Adrenal gland (tissue), 19 donors: ENCODE measurements at regions of chr17 and their contacts with region 1.

Region 1: DNA sequence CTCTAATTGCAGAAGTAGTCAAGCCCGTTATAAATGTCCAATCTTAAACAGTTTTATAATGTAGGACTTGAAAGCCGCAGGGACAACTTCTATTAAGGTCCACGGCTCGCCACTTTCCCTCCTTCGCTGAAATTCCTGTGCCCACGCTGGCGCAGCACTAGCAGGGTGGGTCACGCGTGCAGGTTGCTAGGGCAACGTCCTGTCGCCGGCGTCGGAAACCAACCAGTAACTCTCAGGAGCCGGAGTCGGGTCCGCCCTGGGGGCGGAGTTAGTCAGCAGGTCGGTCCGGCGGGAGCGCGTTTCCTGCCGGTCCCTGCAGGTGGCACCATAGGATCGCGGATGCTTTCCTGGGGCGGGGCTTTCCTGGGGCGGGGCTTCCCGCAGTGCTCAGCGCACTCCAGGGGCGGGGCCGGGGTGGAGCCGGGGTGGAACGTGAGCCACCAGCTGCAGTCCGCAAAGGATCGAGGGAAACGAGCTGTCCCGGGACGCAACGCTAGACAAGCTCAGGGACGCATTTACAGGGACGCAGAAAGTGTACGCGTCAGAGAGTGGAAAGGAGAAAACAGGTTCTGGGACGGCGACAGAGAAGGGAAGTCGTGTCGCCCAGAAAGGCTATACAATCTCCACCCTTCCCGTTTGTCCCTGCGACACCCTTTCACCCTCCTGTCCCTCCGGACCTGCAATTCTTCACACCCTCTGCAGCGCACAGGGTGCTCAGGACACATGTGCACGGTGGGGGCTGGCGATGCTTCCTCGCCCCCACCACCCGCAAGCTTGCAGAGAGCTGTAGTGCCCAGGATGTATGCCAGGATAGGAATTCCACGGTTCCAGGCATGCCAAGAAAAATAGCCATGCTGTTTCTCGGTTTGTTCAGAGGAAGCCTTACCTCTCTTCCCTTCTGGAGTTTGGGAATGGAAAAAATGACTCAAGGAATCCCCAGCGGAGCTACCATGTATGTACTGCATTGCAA is 12.4 kb downstream of the COPZ2 start:
- DNase-seq: peak; percentile 98 to 99 (median 99)
- H3K4me3 ChIP-seq: peak overlapping the region in 2 of 4 donors; percentile 30 to 59
- H3K27ac ChIP-seq: peak overlapping the region; percentile 64 to 93 (median 84)
- H3K4me1 ChIP-seq: peaks cover 30 to 37% of the 10 kb centered on the region in 2 donors
- H3K27me3 ChIP-seq: no peaks in the 10 kb centered on the region
- CTCF ChIP-seq: peak; percentile 67 to 92 (median 82)
- POLR2A ChIP-seq: peak in 1 of 2 donors; percentile 85

Region 2: DNA sequence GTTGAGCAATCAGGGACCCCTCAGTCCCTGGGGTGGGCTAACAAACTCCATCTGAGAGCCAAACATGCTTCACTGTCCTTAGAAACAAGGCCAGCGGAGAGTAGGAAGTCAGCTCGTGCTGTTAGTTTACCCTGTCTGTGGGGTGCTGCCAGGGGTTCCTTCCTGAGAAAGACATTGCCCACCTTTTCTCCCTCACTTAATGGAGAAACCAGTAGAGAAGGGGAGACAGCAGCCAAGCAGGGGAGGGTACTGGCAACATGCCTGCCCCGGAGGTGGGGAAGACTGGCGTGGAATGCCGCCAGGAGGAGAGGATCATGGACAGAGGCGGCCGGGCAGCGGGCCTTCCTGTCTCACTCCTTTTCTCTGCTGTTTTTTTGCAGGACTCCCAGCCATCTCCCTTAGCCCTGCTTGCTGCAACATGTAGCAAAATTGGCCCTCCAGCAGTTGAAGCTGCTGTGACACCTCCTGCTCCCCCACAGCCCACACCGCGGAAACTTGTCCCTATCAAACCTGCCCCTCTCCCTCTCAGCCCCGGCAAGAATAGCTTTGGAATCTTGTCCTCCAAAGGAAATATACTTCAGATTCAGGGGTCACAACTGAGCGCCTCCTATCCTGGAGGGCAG is 109.3 kb before region 1 on chr17:
- intact Hi-C with region 1: no loop called
- DNase-seq: no peak
- H3K4me3 ChIP-seq: no peak overlapping the region
- H3K27ac ChIP-seq: no peak overlapping the region
- H3K4me1 ChIP-seq: peaks cover 0 to 6% of the 10 kb centered on the region in 2 donors
- H3K27me3 ChIP-seq: no peaks in the 10 kb centered on the region
- CTCF ChIP-seq: no peak
- POLR2A ChIP-seq: no peak

Region 3: DNA sequence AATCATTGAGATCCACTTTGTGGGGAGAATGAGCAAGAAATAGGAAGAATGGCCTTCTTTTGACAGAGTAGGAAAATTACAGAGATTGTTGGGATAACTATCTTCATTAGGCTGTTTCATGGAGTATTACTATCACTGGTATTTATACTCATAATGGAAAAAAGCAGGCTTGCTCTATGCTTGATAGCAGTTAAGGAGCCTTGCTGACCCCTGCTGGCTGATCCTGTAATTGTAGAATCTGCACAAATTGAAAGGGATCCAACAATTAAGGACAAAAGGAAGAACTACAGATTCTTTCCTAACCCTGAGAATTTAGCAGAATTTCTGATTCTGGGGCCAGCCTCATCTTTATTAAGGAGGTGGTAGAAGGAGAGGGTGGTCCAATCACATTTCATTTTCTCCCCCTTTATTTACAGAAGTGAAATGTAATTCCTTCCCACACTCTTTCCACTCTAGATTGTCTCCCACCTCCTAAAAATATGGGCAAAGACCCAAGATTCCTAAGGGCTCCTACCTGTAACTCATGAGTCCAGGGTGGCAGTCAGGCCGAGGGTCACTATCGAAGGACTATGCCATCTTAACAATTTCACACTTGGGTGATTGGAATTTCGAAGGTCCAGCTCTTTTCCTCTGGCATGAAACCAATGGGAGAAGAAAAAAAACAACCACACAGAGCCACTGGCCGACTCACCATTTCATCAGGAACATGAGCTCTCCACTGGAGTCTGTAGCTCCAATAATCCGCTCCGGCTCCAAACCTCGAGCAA is 49.3 kb after region 1 on chr17:
- intact Hi-C with region 1: loop called (anchors 5 kb)
- DNase-seq: peak; percentile 81 to 96 (median 86)
- H3K4me3 ChIP-seq: no peak overlapping the region
- H3K27ac ChIP-seq: peak overlapping the region in 2 of 5 donors; percentile 35 to 89
- H3K4me1 ChIP-seq: peaks cover 0 to 7% of the 10 kb centered on the region in 2 donors
- H3K27me3 ChIP-seq: no peaks in the 10 kb centered on the region
- CTCF ChIP-seq: peak; percentile 77 to 95 (median 92)
- POLR2A ChIP-seq: no peak

Region 4: GRCh38 chr17:48618256-48618897 is 593.2 kb after region 1 on chr17:
- intact Hi-C with region 1: loop called in 1 of 2 experiments (anchors 10 kb)
- DNase-seq: peak; percentile 84 to 95 (median 91)
- H3K4me3 ChIP-seq: peak overlapping the region in 1 of 4 donors; percentile 42
- H3K27ac ChIP-seq: no peak overlapping the region
- H3K4me1 ChIP-seq: peaks cover 0 to 6% of the 10 kb centered on the region in 2 donors
- H3K27me3 ChIP-seq: peaks cover 66% of the 10 kb centered on the region
- CTCF ChIP-seq: peak; percentile 97 to 99 (median 98)
- POLR2A ChIP-seq: no peak